ENCODE measurements at regions of chr20 and their contacts with region 1.

Region 1: DNA sequence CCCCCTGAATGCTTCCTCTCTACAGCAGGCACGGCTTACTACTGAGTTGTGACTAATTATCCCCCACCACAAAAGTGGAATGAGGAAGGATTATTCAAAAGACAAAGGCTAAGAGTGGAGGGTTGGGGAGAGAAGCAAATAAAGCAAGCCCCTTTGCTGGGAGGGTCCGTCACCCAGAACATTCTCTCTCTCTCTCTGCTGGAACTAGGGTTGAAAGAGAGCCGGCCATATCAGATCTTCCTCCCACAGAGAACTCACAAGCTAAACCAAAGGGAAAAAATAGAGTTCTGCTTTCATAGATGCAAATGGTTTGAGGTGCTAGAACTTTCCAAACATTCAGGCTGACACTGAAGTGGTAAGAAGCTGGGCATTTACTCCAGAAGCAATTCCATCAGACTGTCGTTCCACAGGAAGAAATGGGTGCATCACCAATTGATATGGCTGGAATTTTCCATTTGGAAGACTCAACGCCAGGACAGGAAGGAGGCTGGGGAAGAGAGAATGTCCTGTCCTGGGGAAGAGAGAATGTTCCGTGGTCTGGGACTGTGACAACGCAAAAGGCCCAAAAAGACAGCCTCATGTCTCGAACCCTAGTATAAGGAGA is 7.9 kb downstream of the ZMYND8 start:
- DNase-seq: no peak
- ATAC-seq: peak; percentile 2; the same call in 1 of the 3 replicates
- H3K4me3 ChIP-seq: peak overlapping the region; percentile 77
- H3K27ac ChIP-seq: peak overlapping the region; percentile 99
- H3K4me1 ChIP-seq: peaks cover 33% of the 10 kb centered on the region
- H3K27me3 ChIP-seq: no peaks in the 10 kb centered on the region
- CTCF ChIP-seq: no peak
- EP300 ChIP-seq: no peak
- POLR2A ChIP-seq: no peak
- RAD21 ChIP-seq: no peak

Region 2: DNA sequence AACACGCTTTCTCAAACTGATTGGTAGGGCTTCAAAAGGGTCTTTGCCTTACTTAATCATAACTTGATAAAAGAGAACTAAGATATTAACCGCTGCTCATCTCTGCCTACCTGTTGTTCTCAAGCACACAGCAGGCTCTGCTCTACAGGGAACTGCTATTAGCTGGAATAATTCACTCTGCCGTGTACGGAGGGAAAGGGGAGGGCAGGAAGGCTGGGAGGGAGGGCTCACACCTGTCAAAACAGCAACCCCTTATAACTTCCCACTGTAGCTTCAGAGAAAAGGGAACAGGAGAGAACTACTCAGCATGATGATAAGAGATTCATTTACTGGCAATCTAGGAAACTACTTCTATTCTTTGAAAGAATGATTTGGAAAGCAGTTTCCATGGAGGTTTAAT is 67.3 kb before region 1 on chr20:
- CTCF ChIA-PET with region 1: no interaction called
- POLR2A ChIA-PET with region 1: interaction called, 3 read pairs
- RAD21 ChIA-PET with region 1: no interaction called
- SMC1A ChIA-PET with region 1: interaction called, 72 read pairs
- in situ Hi-C with region 1: no loop called
- intact Hi-C with region 1: loop called (anchors 2 kb)
- DNase-seq: no peak
- ATAC-seq: no peak
- H3K4me3 ChIP-seq: no peak overlapping the region
- H3K27ac ChIP-seq: no peak overlapping the region
- H3K4me1 ChIP-seq: 0 out of 2 replicates have a peak, but pooled peaks cover under 1% of the 10 kb centered on the region
- H3K27me3 ChIP-seq: no peaks in the 10 kb centered on the region
- CTCF ChIP-seq: no peak
- EP300 ChIP-seq: no peak
- POLR2A ChIP-seq: no peak
- RAD21 ChIP-seq: no peak

Measured in GM12878 (cell line).